ENCODE measurements at regions of chr2 and their contacts with region 1.

Region 1: GRCh38 chr2:187581125-187581896 is 27.1 kb upstream of the TFPI start:
- DNase-seq: peak; percentile 76
- ATAC-seq: peak; percentile 68
- H3K4me3 ChIP-seq: peak overlapping the region in 1 of 2 experiments; percentile 16; a peak in 3 of 4 replicates
- H3K27ac ChIP-seq: no peak overlapping the region
- H3K4me1 ChIP-seq: peaks cover 0 to 11% of the 10 kb centered on the region in 2 experiments; a peak in 2 of 4 replicates
- H3K27me3 ChIP-seq: no peaks in the 10 kb centered on the region
- CTCF ChIP-seq: peak; percentile 54 to 81 (median 76); a peak in 5 of 6 replicates
- POLR2A ChIP-seq: no peak
- RAD21 ChIP-seq: peak; percentile 68

Region 2: DNA sequence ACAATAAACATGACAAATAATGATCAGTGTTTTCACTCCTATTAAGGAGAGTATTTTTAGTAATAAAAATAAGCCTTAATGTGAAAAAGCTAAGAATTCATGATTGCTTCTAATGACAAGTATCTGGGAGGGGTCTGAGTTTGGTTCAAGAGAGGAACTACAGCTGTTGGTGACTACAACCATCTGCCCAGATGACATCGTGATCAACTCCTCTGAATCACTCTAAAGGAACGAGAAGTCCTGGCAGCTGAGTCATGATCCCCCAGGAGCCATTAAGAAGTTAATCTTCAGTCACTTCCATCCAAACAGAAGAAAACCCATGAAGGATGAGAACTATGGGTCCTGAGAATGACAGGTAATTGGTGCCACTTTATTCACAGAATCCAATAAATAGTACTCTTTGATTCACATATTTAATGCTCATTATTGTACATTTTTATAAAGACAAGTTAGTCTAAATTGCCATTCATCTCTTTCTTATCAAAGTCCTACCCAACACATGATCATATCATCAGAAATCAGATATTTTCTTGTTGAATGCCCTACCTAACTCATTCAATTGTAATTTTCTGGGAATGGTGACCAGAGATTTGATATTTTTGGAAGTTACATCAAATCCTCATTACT is 33.8 kb before region 1 on chr2:
- CTCF ChIA-PET with region 1: interaction called, 25 read pairs
- POLR2A ChIA-PET with region 1: no interaction called
- RAD21 ChIA-PET with region 1: no interaction called
- intact Hi-C with region 1: no loop called
- DNase-seq: peak; percentile 92
- ATAC-seq: peak; percentile 85
- H3K4me3 ChIP-seq: peak overlapping the region in 1 of 2 experiments; percentile 20; a peak in 2 of 4 replicates
- H3K27ac ChIP-seq: peak overlapping the region; percentile 93; the same call in 1 of the 2 replicates
- H3K4me1 ChIP-seq: peaks cover 61 to 91% of the 10 kb centered on the region in 2 experiments
- H3K27me3 ChIP-seq: no peaks in the 10 kb centered on the region
- CTCF ChIP-seq: no peak
- POLR2A ChIP-seq: no peak
- RAD21 ChIP-seq: no peak; the same call in 1 of the 2 replicates

Region 3: DNA sequence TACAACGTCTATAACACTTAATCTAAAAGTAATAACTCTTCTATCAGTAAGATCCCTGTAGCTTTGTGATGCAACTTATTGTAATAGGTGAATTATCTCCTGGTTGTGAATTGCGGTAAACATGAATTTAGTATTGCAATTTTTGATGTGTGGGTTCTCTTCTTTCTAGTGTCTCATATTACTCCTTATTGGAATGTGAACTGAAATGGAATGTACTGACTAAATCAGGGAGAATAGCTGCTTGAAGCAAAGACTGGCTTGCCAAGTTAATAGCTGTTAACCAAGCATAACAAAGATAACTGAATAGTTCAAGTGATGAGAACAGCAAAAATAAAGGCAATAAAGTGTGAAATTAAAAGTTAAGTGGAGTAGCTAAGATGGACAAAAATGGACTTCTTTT is 33.4 kb after region 1 on chr2:
- CTCF ChIA-PET with region 1: interaction called, 11 read pairs
- POLR2A ChIA-PET with region 1: no interaction called
- RAD21 ChIA-PET with region 1: no interaction called
- intact Hi-C with region 1: no loop called
- DNase-seq: no peak
- ATAC-seq: no peak
- H3K4me3 ChIP-seq: no peak overlapping the region
- H3K27ac ChIP-seq: no peak overlapping the region
- H3K4me1 ChIP-seq: no peaks in the 10 kb centered on the region
- H3K27me3 ChIP-seq: no peaks in the 10 kb centered on the region
- CTCF ChIP-seq: no peak
- POLR2A ChIP-seq: no peak
- RAD21 ChIP-seq: no peak

Region 4: GRCh38 chr2:188512456-188512855 is 931.1 kb after region 1 on chr2:
- CTCF ChIA-PET with region 1: interaction called, 11 read pairs
- POLR2A ChIA-PET with region 1: no interaction called
- RAD21 ChIA-PET with region 1: no interaction called
- intact Hi-C with region 1: loop called (anchors 1 kb)
- DNase-seq: no peak
- ATAC-seq: peak; percentile 60
- H3K4me3 ChIP-seq: no peak overlapping the region
- H3K27ac ChIP-seq: no peak overlapping the region
- H3K4me1 ChIP-seq: peaks cover 0 to 7% of the 10 kb centered on the region in 2 experiments; a peak in 1 of 4 replicates
- H3K27me3 ChIP-seq: no peaks in the 10 kb centered on the region
- CTCF ChIP-seq: peak; percentile 42 to 71 (median 61); a peak in 5 of 6 replicates
- POLR2A ChIP-seq: no peak
- RAD21 ChIP-seq: peak; percentile 89

Region 5: DNA sequence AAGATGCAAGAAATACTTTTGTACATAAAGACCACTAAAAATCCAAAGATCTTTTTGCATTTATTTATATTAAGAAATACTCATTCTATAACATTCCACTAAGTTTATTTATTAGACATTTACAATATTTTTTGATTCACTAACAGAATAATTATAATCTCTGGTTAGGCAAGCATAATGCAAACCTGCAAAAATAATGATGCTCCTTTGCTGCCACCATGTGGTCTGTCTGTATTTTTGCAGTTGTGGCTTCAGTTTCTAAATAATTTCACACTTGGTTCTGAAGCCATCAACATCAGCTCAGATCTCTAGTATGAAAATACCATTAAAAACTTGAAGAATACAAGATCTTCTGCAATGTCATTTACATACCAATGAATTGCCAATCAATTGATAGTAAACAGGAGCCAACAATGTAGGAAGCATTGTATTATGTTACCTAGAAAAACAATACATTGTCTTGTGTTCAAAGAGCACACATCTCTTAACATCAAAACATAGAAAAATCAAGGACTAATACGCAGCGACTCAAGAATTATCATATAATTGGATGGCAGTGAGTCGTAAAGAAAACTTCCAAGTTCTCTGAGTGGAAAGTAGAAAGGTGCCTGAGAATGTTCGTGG is 1831.1 kb after region 1 on chr2:
- CTCF ChIA-PET with region 1: no interaction called
- POLR2A ChIA-PET with region 1: no interaction called
- RAD21 ChIA-PET with region 1: no interaction called
- intact Hi-C with region 1: loop called (anchors 5 kb)
- DNase-seq: peak; percentile 24
- ATAC-seq: peak; percentile 69
- H3K4me3 ChIP-seq: no peak overlapping the region
- H3K27ac ChIP-seq: no peak overlapping the region
- H3K4me1 ChIP-seq: no peaks in the 10 kb centered on the region
- H3K27me3 ChIP-seq: no peaks in the 10 kb centered on the region
- CTCF ChIP-seq: peak; percentile 48 to 80 (median 77); a peak in 5 of 6 replicates
- POLR2A ChIP-seq: no peak
- RAD21 ChIP-seq: peak; percentile 84